Esophagus squamous epithelium (tissue), 5 donors: ENCODE measurements at regions of chr7 and their contacts with region 1.

Region 1: DNA sequence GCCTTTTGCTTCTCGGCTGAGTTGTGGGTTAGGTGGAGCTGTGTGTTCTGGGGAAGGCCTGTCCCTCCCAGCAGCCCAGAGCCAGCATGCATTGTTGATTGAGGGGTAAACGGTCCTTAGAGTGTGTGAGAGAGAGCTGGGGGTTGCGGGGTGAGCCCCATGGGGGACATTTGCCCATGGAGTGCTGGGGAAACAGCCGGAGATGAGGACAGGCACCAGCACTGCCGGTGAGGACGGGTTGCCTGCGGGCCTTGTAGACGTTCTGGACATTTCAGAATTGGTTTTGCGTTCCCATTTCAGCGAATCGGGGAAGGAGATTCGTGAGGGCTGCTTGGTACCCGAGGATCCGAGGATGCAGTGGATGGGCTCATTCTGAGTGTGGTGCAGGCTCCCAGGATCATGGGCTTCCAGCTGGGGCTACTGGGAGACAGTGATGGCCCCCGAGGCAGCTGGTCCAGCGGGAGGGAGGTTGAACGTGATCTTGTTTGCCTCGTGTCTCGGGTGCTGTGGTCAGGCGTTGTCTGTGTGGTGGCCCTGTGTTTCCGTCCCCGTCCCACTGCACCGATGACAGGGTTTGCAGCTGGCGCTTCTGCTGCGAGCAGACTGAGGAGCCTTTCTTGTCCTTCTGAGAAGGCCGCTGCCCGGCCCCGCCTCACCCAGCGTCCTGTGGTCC is 113.9 kb downstream of the CYTH3 start:
- DNase-seq: no peak
- H3K4me3 ChIP-seq: no peak overlapping the region
- H3K27ac ChIP-seq: no peak overlapping the region
- H3K4me1 ChIP-seq: peaks cover 0 to 28% (median 9%) of the 10 kb centered on the region in 3 donors
- H3K27me3 ChIP-seq: no peaks in the 10 kb centered on the region
- CTCF ChIP-seq: no peak
- POLR2A ChIP-seq: no peak

Region 2: GRCh38 chr7:6256677-6257535 is 98.3 kb after region 1 on chr7:
- intact Hi-C with region 1: no loop called
- DNase-seq: no peak
- H3K4me3 ChIP-seq: no peak overlapping the region
- H3K27ac ChIP-seq: peak overlapping the region in 3 of 4 donors; percentile 24 to 77 (median 44)
- H3K4me1 ChIP-seq: peaks cover 0 to 98% (median 42%) of the 10 kb centered on the region in 3 donors
- H3K27me3 ChIP-seq: no peaks in the 10 kb centered on the region
- CTCF ChIP-seq: no peak
- POLR2A ChIP-seq: no peak

Region 3: GRCh38 chr7:6323967-6324701 is 165.6 kb after region 1 on chr7:
- intact Hi-C with region 1: loop called (anchors 5 kb)
- DNase-seq: no peak
- H3K4me3 ChIP-seq: no peak overlapping the region
- H3K27ac ChIP-seq: no peak overlapping the region
- H3K4me1 ChIP-seq: peaks cover 0 to 7% (median 0%) of the 10 kb centered on the region in 3 donors
- H3K27me3 ChIP-seq: no peaks in the 10 kb centered on the region
- CTCF ChIP-seq: no peak
- POLR2A ChIP-seq: no peak

Region 4: DNA sequence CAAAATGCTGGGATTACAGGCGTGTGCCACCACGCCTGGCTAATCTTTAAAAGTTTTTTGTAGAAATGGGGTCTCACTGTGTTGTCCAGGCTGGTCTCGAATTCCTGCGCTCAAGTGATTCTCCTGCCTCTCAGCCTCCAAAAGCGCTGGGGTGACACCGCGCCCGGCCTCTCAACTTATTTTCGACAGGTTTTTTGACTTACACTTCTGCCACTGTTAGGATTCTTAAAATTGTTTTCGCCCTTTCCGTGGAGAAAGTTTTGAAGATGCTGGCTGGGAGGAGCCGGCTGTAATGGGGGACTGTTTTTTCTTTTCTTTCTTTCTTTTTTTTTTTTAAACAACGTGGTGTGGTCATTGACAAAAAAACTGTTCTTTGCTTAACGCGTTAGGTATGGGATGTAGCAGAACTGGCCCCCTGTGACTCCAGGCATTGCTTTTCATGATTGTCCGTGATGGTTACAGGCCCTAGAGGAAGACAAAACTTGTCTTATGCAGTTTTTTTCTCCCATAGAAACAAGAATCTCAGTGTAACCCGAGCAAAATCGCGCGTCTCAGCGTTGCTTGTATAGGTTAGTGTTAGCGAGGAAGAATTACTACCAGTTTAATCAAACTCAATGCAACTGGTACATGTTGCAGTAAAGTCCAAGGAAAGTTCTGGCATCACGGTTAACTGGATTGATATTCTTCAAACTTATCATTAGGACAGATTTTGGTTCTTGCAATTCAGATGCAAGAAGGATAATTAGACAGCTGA is 217.0 kb after region 1 on chr7:
- intact Hi-C with region 1: no loop called
- DNase-seq: no peak
- H3K4me3 ChIP-seq: peak overlapping the region; percentile 66 to 97 (median 79)
- H3K27ac ChIP-seq: peak overlapping the region; percentile 97 to 100 (median 98)
- H3K4me1 ChIP-seq: peaks cover 13 to 57% (median 42%) of the 10 kb centered on the region in 3 donors
- H3K27me3 ChIP-seq: no peaks in the 10 kb centered on the region
- CTCF ChIP-seq: no peak
- POLR2A ChIP-seq: no peak